Activated CD4-positive, alpha-beta T cell treated with anti-CD3 and anti-CD28 coated beads for 36 hours (primary cell): ENCODE measurements at regions of chr2 and their contacts with region 1.

Region 1: DNA sequence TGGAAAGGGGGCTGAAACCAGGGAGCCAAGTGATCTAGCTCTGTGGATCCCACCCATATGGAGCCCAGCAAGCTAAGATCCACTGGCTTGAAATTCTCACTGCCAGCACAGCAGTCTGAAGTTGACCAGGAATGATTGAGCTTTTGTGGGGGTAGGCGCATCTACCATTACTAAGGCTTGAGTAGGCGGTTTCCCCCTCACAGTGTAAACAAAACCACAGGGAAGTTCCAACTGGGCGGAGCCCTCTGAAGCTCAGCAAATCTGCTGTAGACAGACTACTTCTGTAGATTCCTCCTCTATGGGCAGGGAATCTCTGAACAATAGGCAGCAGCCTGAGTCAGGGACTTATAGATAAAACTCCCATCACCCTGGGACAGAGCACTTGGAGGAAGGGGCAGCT is 96.7 kb downstream of the CCDC148 start:
- DNase-seq: peak; percentile 14
- ATAC-seq: no peak
- H3K4me3 Mint-ChIP-seq: no peak overlapping the region
- H3K27ac Mint-ChIP-seq: no peak overlapping the region
- H3K4me1 Mint-ChIP-seq: no peaks in the 10 kb centered on the region
- H3K27me3 Mint-ChIP-seq: no peaks in the 10 kb centered on the region

Region 2: DNA sequence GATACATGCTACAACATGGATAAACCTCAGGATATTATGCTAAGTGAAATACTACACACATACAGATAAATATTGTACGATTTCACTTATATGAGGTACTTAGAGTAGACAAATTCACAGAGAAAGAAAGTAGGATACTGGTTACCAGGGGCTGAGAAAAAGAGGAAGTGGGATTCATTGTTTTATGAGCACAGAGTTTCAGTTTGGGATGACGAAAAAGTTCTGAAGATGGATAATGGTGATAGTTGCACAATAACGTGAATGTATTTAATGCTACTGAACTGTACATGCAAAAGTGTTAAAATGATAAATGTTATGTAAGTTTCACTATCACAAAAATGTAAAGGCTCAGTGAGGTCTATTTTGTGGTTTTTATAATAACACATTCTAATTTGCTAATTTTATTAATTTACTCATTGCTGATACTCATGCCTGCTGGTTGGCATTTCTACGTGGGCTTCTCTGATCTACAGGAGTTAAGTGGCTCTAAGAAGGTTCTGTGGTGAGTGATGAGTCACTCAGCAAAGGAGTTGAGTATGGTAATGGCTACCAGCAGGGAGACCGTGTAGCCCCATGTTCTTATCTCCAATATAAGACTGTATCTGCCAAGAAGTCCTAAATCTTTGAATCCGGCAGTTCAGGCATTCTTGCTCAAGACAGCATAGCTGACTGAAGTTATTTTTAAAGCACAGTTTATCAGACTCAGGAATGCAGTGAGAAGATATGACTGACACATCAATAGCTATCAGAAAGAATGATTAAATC is 217.1 kb before region 1 on chr2:
- CTCF ChIA-PET with region 1: no interaction called
- POLR2A ChIA-PET with region 1: no interaction called
- intact Hi-C with region 1: no loop called
- DNase-seq: no peak
- ATAC-seq: no peak
- H3K4me3 Mint-ChIP-seq: no peak overlapping the region
- H3K27ac Mint-ChIP-seq: no peak overlapping the region
- H3K4me1 Mint-ChIP-seq: no peaks in the 10 kb centered on the region
- H3K27me3 Mint-ChIP-seq: peaks cover 28% of the 10 kb centered on the region

Region 3: GRCh38 chr2:158346032-158346431 is 13.8 kb before region 1 on chr2:
- CTCF ChIA-PET with region 1: no interaction called
- POLR2A ChIA-PET with region 1: no interaction called
- intact Hi-C with region 1: loop called in 1 of 2 experiments (anchors 1 kb)
- DNase-seq: no peak
- ATAC-seq: no peak
- H3K4me3 Mint-ChIP-seq: no peak overlapping the region
- H3K27ac Mint-ChIP-seq: no peak overlapping the region
- H3K4me1 Mint-ChIP-seq: no peaks in the 10 kb centered on the region
- H3K27me3 Mint-ChIP-seq: peaks cover 6% of the 10 kb centered on the region